ENCODE measurements at regions of chr14 and their contacts with region 1.

Region 1: DNA sequence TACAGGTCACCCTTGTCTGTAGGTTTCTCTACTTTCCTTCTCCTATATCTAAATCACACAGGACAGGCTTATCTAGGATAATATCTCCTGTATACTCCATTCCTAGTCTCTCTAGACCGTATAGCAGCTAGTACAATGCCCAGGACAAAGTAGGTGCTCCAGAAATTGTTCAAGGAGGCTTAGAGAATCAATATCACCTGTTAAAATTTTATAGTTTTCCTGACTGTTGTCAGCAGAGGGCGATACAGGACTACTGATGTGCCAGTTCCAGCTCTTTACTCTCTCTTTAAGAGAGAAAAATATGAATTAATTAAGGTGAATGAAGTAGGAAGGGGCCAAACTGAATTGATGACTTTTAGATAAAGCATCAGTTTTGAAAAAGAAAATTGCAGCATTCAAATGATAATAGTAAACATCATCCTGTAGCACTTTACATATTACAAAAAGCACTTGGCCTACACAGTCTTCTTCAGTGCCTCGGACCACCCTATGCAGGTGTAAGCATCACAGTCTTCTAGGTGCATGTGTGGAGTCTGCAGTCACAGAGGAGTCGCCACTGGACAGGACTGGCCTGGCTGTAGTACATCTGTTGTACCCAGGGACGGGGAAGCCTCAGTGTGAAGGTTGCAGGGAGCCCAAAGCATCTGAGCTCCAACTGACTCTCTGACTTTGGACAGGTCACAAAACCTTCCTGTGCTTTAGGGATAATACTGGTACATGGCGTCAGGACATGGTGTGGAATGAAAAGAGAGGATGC is 61.9 kb upstream of the MAX start:
- DNase-seq: peak; percentile 34 to 55
- H3K4me3 ChIP-seq: no peak overlapping the region
- H3K27ac ChIP-seq: no peak overlapping the region
- H3K4me1 ChIP-seq: peaks cover 17% of the 10 kb centered on the region
- H3K27me3 ChIP-seq: no peaks in the 10 kb centered on the region
- CTCF ChIP-seq: peak; percentile 97

Region 2: GRCh38 chr14:64971943-64972791 is 192.1 kb before region 1 on chr14 and contains the start of gene RAB15:
- CTCF ChIA-PET with region 1: no interaction called
- POLR2A ChIA-PET with region 1: no interaction called
- intact Hi-C with region 1: no loop called
- DNase-seq: peak in 1 of 2 experiments; percentile 42
- H3K4me3 ChIP-seq: peak within 1 kb of the TSS; percentile 83
- H3K27ac ChIP-seq: peak within 1 kb of the TSS; percentile 79
- H3K4me1 ChIP-seq: peaks cover 45% of the 10 kb centered on the region
- H3K27me3 ChIP-seq: no peaks in the 10 kb centered on the region
- CTCF ChIP-seq: no peak
- total RNA-seq, gene RAB15: 52.9 and 74.9 TPM in 2 replicates

Region 3: DNA sequence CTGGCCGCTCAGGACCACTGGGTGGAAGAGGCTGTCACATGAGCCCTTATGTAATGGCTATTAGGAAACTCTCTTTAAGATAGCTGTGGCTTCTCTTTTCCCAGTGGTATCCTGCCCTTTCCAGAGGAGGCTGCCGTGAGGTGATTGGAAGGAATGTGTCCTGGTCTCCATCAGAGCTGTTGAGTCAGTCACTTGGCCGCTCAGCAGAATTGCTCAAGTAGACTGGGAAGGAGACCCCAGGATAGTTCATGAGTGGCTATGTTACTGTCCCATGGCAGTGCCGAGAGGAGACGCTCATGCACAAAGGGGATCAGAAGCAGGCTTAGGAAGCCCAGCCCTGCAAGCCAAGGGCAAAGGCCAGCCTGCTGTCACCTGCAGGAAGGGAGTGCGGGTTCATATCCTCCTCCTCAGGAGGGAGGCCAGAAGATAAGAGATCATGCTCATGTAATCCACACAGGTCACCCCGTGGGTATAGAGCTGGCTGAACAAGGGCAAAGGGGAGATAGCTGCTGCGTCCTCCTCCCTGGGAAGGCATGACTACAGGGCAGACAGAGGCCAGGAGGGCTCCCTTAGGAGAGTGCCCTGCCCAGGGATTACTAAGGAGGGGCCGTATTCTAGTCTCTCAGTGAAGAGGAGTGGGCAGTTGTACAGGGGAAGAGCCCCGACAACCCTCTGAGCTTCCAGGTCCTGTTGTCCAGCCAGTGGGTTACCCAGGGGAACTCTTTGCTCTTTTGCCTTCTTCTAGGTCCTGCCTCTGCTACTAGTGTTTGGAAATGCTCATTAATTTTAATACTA is 75.1 kb after region 1 on chr14:
- CTCF ChIA-PET with region 1: interaction called, 4 read pairs
- POLR2A ChIA-PET with region 1: no interaction called
- intact Hi-C with region 1: loop called (anchors 1 kb)
- DNase-seq: peak; percentile 68 to 91
- H3K4me3 ChIP-seq: peak overlapping the region; percentile 44; the same call in 1 of the 2 replicates
- H3K27ac ChIP-seq: peak overlapping the region; percentile 96
- H3K4me1 ChIP-seq: peaks cover 90% of the 10 kb centered on the region
- H3K27me3 ChIP-seq: no peaks in the 10 kb centered on the region
- CTCF ChIP-seq: no peak

Region 4: DNA sequence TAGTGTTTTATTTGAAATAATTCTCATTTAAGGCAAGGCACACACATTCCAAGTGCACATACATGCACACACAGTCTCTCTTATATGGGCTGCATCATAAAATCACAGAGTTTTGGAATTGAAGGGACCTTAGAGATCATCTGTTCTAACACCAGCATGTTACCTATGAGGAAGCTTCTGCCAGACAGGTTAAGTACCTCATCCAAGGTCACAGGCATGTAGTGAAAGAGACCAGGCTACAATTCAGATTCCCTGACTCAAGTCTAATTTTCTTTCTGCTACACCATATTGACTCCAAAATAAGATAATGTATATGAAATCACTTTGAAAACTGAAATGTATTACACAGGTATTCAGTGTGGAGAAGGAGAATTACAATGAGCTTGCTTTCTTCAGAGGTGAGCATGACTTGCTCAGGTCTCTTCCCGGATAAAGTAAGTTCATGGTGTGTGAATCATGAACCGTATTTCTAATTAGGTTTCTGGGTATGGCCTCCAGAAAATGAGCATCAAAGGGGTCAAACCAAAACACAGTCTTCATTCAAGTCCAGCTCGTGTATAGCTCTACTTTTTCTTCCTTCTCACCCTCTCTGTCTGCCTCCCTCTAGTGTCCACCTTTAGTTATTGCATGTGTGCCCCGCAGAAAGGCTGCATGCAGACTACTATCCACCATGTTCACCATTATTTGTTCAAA is 660.2 kb after region 1 on chr14:
- CTCF ChIA-PET with region 1: interaction called, 7 read pairs
- POLR2A ChIA-PET with region 1: no interaction called
- intact Hi-C with region 1: loop called (anchors 1 kb)
- DNase-seq: peak; percentile 46 to 48
- H3K4me3 ChIP-seq: no peak overlapping the region
- H3K27ac ChIP-seq: no peak overlapping the region
- H3K4me1 ChIP-seq: no peaks in the 10 kb centered on the region
- H3K27me3 ChIP-seq: no peaks in the 10 kb centered on the region
- CTCF ChIP-seq: peak; percentile 92

Region 5: GRCh38 chr14:66070509-66071319 is 906.5 kb after region 1 on chr14:
- CTCF ChIA-PET with region 1: interaction called, 3 read pairs
- POLR2A ChIA-PET with region 1: no interaction called
- intact Hi-C with region 1: loop called (anchors 1 kb)
- DNase-seq: peak in 1 of 2 experiments; percentile 63
- H3K4me3 ChIP-seq: no peak overlapping the region
- H3K27ac ChIP-seq: no peak overlapping the region
- H3K4me1 ChIP-seq: no peaks in the 10 kb centered on the region; the same call in 1 of the 2 replicates
- H3K27me3 ChIP-seq: no peaks in the 10 kb centered on the region
- CTCF ChIP-seq: peak; percentile 98

Measured in PC-9 (cell line).